ENCODE measurements at regions of chr4 and their contacts with region 1.

Region 1: DNA sequence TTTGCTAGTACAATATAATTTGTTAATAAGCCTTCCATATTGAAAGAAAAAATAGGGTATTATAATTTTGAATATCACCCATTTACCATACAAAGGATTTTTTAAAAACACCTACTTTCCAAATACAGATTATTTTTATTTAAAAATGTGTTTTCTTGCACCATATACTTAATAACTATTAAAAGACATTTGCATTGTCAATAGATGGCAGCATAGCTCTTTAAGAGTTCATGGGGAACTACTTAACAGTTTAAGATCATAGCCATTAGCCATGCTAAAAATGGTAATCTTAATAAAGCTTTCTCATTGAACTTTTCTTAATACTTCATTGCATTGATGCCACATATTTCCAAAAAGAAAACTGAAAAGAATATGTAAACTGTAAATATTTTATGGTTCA is 1995.9 kb downstream of the C4orf33 start:
- DNase-seq: peak in 1 of 2 experiments; percentile 5
- H3K4me3 ChIP-seq: no peak overlapping the region
- H3K4me3 Mint-ChIP-seq: no peak overlapping the region
- H3K27ac Mint-ChIP-seq: no peak overlapping the region
- H3K4me1 ChIP-seq: no peaks in the 10 kb centered on the region
- H3K4me1 Mint-ChIP-seq: no peaks in the 10 kb centered on the region
- H3K27me3 ChIP-seq: no peaks in the 10 kb centered on the region
- H3K27me3 Mint-ChIP-seq: no peaks in the 10 kb centered on the region
- CTCF ChIP-seq: peak in 1 of 2 experiments; percentile 15

Region 2: GRCh38 chr4:131388277-131388676 is 296.4 kb after region 1 on chr4:
- CTCF ChIA-PET with region 1: no interaction called
- POLR2A ChIA-PET with region 1: no interaction called
- intact Hi-C with region 1: no loop called
- DNase-seq: no peak
- H3K4me3 ChIP-seq: no peak overlapping the region
- H3K4me3 Mint-ChIP-seq: no peak overlapping the region
- H3K27ac Mint-ChIP-seq: no peak overlapping the region
- H3K4me1 ChIP-seq: no peaks in the 10 kb centered on the region
- H3K4me1 Mint-ChIP-seq: no peaks in the 10 kb centered on the region
- H3K27me3 ChIP-seq: no peaks in the 10 kb centered on the region
- H3K27me3 Mint-ChIP-seq: no peaks in the 10 kb centered on the region
- CTCF ChIP-seq: no peak

Region 3: DNA sequence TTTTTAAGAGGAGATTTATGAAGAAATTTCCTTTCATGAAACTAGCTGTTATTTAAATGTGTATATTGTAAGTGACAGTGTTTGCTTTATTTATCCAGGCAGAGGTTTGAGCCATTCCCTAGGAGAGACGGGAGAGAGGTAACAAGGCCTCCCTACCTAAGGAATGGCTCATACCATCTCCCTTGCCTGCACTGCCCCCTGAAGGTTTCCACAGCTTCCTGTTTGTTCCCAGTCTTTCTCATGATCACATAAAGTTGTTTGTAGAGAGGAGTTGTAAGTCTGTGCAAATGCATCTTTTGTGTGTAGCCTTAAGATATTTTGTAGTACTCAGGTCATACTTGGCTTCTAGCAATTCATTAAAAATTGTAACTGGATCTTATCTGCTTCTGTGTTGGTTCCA is 552.7 kb after region 1 on chr4:
- CTCF ChIA-PET with region 1: no interaction called
- POLR2A ChIA-PET with region 1: no interaction called
- intact Hi-C with region 1: loop called (anchors 2 kb)
- DNase-seq: peak; percentile 11 to 33
- H3K4me3 ChIP-seq: no peak overlapping the region
- H3K4me3 Mint-ChIP-seq: no peak overlapping the region
- H3K27ac Mint-ChIP-seq: no peak overlapping the region
- H3K4me1 ChIP-seq: no peaks in the 10 kb centered on the region
- H3K4me1 Mint-ChIP-seq: no peaks in the 10 kb centered on the region
- H3K27me3 ChIP-seq: no peaks in the 10 kb centered on the region
- H3K27me3 Mint-ChIP-seq: no peaks in the 10 kb centered on the region
- CTCF ChIP-seq: peak in 1 of 2 experiments; percentile 8

Region 4: DNA sequence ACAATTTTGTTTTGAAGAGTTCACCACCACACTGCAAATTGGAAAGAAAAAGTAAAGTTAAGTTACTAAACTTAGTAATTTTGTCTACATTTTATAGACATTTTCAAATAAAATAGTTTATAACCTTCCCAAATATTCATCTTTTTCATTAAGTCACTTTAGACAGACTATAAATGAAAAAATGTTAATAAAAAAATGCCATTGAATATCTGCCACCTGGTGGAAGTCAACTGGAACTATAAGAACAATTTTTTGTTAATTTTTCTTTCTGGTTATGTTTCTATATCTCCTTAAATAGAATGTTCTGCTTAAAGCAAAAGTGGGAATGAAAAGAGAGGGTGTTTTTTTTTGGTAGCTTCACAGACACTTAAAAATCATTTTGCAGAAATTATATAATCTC is 1522.8 kb after region 1 on chr4:
- CTCF ChIA-PET with region 1: no interaction called
- POLR2A ChIA-PET with region 1: no interaction called
- intact Hi-C with region 1: loop called (anchors 5 kb)
- DNase-seq: no peak
- H3K4me3 ChIP-seq: no peak overlapping the region
- H3K4me3 Mint-ChIP-seq: no peak overlapping the region
- H3K27ac Mint-ChIP-seq: no peak overlapping the region
- H3K4me1 ChIP-seq: no peaks in the 10 kb centered on the region
- H3K4me1 Mint-ChIP-seq: no peaks in the 10 kb centered on the region
- H3K27me3 ChIP-seq: no peaks in the 10 kb centered on the region
- H3K27me3 Mint-ChIP-seq: no peaks in the 10 kb centered on the region
- CTCF ChIP-seq: peak in 1 of 2 experiments; percentile 39

Region 5: DNA sequence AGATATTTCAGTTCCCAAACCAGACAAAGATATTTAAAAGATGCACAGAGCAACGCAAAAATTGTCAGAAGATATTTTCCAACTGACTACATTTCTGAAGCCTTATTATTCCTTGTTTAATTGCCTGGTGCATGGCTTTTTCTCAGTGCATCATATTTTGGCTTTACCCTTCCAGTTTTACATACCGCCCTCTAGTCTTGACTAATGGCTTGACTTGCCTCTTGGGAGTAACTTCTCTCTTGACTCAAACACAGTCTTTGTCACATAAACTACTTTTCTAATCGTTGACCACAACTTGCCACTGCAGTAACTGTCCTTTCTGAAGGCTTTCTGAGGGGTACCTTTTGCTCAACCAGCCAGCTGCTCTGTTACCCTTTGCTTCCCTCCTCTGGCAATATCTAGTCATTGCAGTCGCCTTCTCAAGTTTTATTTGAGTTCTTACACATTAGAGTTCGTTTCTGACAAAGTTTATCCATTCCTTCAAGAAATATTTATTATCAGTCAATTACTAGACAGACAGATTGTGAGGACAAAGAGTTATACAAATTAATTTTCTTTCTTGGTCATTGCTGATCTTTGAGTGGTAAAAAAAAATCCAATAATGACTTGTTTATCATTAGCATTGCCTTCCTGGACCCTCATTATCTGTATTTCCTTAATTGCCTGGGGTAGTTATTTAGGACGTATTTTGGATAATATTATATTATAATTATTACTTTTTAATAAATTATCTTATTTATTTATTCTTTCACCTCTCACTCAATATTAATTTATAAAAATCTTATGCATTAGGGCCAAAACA is 1550.3 kb after region 1 on chr4:
- CTCF ChIA-PET with region 1: no interaction called
- POLR2A ChIA-PET with region 1: no interaction called
- intact Hi-C with region 1: loop called (anchors 2 kb)
- DNase-seq: peak; percentile 38 to 42
- H3K4me3 ChIP-seq: no peak overlapping the region
- H3K4me3 Mint-ChIP-seq: no peak overlapping the region
- H3K27ac Mint-ChIP-seq: no peak overlapping the region
- H3K4me1 ChIP-seq: no peaks in the 10 kb centered on the region
- H3K4me1 Mint-ChIP-seq: no peaks in the 10 kb centered on the region
- H3K27me3 ChIP-seq: no peaks in the 10 kb centered on the region
- H3K27me3 Mint-ChIP-seq: no peaks in the 10 kb centered on the region
- CTCF ChIP-seq: peak; percentile 68 to 78